GM12878 (cell line): ENCODE measurements at regions of chr18 and their contacts with region 1.

Region 1: DNA sequence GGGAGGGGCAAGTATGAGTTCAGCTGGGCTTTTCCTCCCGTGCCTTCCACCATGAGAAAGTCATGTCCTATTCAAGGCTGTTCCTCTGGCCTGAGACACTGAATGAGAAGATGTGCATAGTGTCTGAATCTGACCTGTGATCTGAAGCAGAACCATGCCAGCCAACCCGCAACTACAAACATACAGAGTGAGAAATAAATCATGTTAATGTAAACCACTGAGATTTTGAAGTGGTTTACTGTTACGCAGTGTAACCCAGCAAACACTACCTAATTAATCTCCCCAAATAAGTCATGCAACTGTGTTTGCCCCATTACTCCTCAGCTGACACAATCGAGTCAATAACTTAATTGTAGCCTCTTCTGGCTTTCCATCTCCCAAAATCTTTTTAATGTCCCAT is 49.2 kb downstream of the METTL4 start:
- DNase-seq: peak; percentile 31
- ATAC-seq: peak; percentile 98
- H3K4me3 ChIP-seq: no peak overlapping the region
- H3K27ac ChIP-seq: no peak overlapping the region
- H3K4me1 ChIP-seq: no peaks in the 10 kb centered on the region
- H3K27me3 ChIP-seq: no peaks in the 10 kb centered on the region
- CTCF ChIP-seq: no peak
- EP300 ChIP-seq: no peak; a peak in 1 of 4 replicates
- POLR2A ChIP-seq: no peak
- RAD21 ChIP-seq: no peak

Region 2: DNA sequence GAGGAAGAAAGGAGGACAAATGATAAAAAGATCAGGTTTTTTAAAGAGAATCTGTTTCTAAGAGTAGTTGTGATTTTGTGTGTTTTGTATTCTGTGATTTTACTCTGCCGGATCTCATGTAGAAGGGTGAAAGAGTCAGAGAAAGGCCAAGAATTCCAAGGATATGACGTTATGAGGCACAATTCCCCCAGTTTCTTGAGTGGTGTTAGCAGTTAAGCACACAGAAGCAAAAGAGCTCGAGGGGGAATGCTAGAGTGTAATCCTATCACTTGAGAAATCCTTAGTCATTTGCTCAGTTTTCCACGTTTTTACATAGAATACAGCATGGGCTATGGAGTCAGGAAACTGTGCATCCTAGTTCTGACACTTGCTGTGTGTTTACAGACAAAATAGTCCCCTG is 14.4 kb after region 1 on chr18:
- CTCF ChIA-PET with region 1: interaction called, 11 read pairs
- POLR2A ChIA-PET with region 1: no interaction called
- RAD21 ChIA-PET with region 1: interaction called, 3 read pairs
- SMC1A ChIA-PET with region 1: interaction called, 12 read pairs
- in situ Hi-C with region 1: no loop called
- intact Hi-C with region 1: no loop called
- DNase-seq: no peak
- ATAC-seq: no peak
- H3K4me3 ChIP-seq: no peak overlapping the region
- H3K27ac ChIP-seq: no peak overlapping the region
- H3K4me1 ChIP-seq: no peaks in the 10 kb centered on the region
- H3K27me3 ChIP-seq: no peaks in the 10 kb centered on the region
- CTCF ChIP-seq: no peak
- EP300 ChIP-seq: no peak
- POLR2A ChIP-seq: no peak
- RAD21 ChIP-seq: no peak